ENCODE measurements at regions of chr17 and their contacts with region 1.

Region 1: GRCh38 chr17:76240461-76241203 is at the start of gene RNF157:
- DNase-seq: peak; percentile 66
- ATAC-seq: peak; percentile 90
- H3K4me3 Mint-ChIP-seq: peak within 1 kb of the TSS; percentile 90
- H3K27ac Mint-ChIP-seq: peak within 1 kb of the TSS; percentile 86
- H3K4me1 Mint-ChIP-seq: peaks cover 79% of the 10 kb centered on the region
- H3K27me3 Mint-ChIP-seq: no peaks in the 10 kb centered on the region
- total RNA-seq, gene RNF157: 150 to 165 TPM

Region 2: GRCh38 chr17:76091526-76092285 is 148.9 kb before region 1 on chr17:
- CTCF ChIA-PET with region 1: no interaction called
- POLR2A ChIA-PET with region 1: no interaction called
- DNase-seq: no peak
- ATAC-seq: peak; percentile 25
- H3K4me3 Mint-ChIP-seq: no peak overlapping the region
- H3K27ac Mint-ChIP-seq: peak overlapping the region; percentile 62
- H3K4me1 Mint-ChIP-seq: peaks cover 2% of the 10 kb centered on the region
- H3K27me3 Mint-ChIP-seq: no peaks in the 10 kb centered on the region

Region 3: GRCh38 chr17:76252040-76252954 is 11.7 kb after region 1 on chr17:
- CTCF ChIA-PET with region 1: interaction called, 11 read pairs
- POLR2A ChIA-PET with region 1: interaction called, 105 read pairs
- DNase-seq: peak; percentile 65
- ATAC-seq: peak; percentile 72
- H3K4me3 Mint-ChIP-seq: peak overlapping the region; percentile 77
- H3K27ac Mint-ChIP-seq: peak overlapping the region; percentile 96
- H3K4me1 Mint-ChIP-seq: peaks cover 77% of the 10 kb centered on the region
- H3K27me3 Mint-ChIP-seq: no peaks in the 10 kb centered on the region

Measured in activated CD8-positive, alpha-beta T cell treated with anti-CD3 and anti-CD28 coated beads, Interleukin-2, amount 10 ng/mL, durations not matched to agents 7 days and 5 days (primary cell).